Dorsolateral prefrontal cortex (tissue), 120 donors: ENCODE measurements at regions of chr14 and their contacts with region 1.

Region 1: DNA sequence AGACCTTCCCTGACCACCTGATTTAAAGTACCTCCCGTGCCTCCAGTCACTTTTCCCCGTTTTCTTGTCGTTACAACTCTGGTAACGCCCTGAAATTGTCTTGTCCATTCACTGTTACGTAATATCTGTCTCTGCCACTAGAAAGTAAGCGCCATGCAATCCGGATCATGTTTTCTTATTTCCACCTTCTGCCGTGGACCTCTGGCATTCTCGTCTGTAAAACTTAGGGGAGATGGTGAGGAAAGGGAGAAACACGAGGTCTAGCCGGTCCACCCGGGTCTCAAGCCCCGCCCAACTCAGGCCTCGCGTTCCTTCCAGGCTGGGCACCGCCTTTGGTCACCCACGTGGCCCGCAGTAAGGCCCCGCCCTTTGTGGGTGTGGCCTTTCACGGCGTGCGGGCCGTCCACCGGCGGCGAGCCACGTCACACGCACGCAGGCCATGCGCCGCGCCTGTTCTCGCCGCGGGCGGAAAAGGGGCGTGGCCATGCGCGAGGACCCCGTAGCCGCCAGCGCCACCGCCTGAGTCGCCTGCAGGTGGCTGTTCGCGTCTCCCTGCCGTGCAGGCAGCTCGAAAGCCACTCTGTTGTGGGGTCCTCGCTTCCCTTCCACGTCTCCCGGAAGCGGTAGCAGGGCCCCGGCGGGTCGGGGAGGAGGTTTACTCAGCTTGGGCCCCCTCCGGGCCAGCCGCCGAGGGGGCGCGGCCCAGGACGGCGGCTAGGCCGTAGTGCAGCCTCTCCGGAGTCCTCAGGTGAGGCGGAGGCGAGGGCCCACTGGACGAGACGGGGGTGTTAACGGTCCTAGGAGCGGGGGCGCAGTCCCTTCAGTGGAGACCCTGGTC is at the start of gene GOLGA5:
- DNase-seq: peak; percentile 97 to 100 (median 98)
- H3K4me3 ChIP-seq: peak within 1 kb of the TSS; percentile 77 to 100 (median 94)
- H3K27ac ChIP-seq: peak within 1 kb of the TSS; percentile 29 to 94 (median 83)
- H3K27me3 ChIP-seq: no peaks in the 10 kb centered on the region
- CTCF ChIP-seq: peak in 52 of 56 donors; percentile 15 to 77 (median 48)
- total RNA-seq, gene GOLGA5: 20.5 to 37.1 (median 26.5) TPM

Region 2: GRCh38 chr14:92106143-92106926 is 687.6 kb before region 1 on chr14 and contains the start of gene ATXN3:
- intact Hi-C with region 1: loop called in 1 of 2 experiments (anchors 10 kb)
- DNase-seq: peak; percentile 96 to 99 (median 98)
- H3K4me3 ChIP-seq: peak within 1 kb of the TSS; percentile 58 to 100 (median 93)
- H3K27ac ChIP-seq: peak within 1 kb of the TSS; percentile 75 to 99 (median 95)
- H3K27me3 ChIP-seq: no peaks in the 10 kb centered on the region
- CTCF ChIP-seq: peak; percentile 70 to 94 (median 85)
- total RNA-seq, gene ATXN3: 31.2 to 63.2 (median 46.6) TPM

Region 3: GRCh38 chr14:92121670-92122350 is 672.1 kb before region 1 on chr14 and contains the starts of genes CPSF2 and NDUFB1:
- intact Hi-C with region 1: loop called in 1 of 2 experiments (anchors 5 kb)
- DNase-seq: peak; percentile 72 to 91 (median 88)
- H3K4me3 ChIP-seq: peak within 1 kb of the TSS; percentile 72 to 99 (median 94)
- H3K27ac ChIP-seq: peak within 1 kb of the TSS; percentile 69 to 99 (median 96)
- H3K27me3 ChIP-seq: no peaks in the 10 kb centered on the region
- CTCF ChIP-seq: peak in 34 of 56 donors; percentile 2 to 52 (median 26)
- total RNA-seq, gene CPSF2: 26.8 to 56.4 (median 40.4) TPM
- total RNA-seq, gene NDUFB1: 64.8 to 207 (median 138) TPM

Region 4: GRCh38 chr14:92612988-92613658 is 180.8 kb before region 1 on chr14:
- intact Hi-C with region 1: no loop called
- DNase-seq: no peak
- H3K4me3 ChIP-seq: no peak overlapping the region
- H3K27ac ChIP-seq: no peak overlapping the region
- H3K27me3 ChIP-seq: no peaks in the 10 kb centered on the region
- CTCF ChIP-seq: peak in 52 of 56 donors; percentile 15 to 63 (median 46)

Region 5: DNA sequence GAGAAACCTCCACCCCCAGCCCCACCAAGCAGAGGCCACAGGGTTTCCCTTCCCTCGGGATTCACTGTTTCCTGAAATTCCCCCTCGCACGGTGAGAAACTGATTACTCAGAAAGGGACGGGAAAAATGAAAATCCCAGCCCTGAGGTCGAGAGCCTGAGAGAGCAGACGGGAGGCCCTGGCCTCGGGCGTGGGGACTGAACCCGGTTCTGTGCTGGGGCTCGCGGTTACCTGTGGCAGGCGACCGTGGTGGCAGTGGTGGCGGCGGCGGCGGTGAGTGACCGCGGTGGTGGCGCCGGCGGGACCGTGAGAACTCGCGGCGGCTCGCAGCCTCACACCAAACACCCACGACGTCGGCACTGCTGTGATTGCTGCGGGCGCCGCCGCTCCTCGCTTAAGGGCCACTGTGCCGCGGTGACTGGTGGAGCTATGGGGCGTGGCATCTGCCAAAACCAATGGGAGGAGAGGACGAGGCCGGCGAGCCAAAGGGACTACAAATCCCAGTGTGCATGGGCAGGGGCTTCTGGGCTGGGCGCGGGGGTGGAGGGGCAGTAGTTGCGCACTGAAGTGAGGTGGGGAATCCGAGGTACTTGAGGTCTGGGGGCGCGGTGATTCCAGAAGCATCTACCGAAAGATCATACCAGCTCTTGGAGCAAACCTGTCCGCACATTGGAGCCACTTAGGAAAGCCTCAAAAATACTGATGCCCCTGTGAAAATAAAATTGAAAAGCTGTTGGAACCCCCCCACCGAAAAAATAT is 45.5 kb before region 1 on chr14 and contains the start of gene LGMN:
- intact Hi-C with region 1: loop called in 1 of 2 experiments (anchors 1 kb)
- DNase-seq: peak; percentile 94 to 99 (median 99)
- H3K4me3 ChIP-seq: peak within 1 kb of the TSS; percentile 63 to 99 (median 88)
- H3K27ac ChIP-seq: peak within 1 kb of the TSS; percentile 14 to 94 (median 81)
- H3K27me3 ChIP-seq: no peaks in the 10 kb centered on the region
- CTCF ChIP-seq: peak in 34 of 56 donors; percentile 8 to 55 (median 32)
- total RNA-seq, gene LGMN: 34.8 to 93.8 (median 64.1) TPM

Region 6: DNA sequence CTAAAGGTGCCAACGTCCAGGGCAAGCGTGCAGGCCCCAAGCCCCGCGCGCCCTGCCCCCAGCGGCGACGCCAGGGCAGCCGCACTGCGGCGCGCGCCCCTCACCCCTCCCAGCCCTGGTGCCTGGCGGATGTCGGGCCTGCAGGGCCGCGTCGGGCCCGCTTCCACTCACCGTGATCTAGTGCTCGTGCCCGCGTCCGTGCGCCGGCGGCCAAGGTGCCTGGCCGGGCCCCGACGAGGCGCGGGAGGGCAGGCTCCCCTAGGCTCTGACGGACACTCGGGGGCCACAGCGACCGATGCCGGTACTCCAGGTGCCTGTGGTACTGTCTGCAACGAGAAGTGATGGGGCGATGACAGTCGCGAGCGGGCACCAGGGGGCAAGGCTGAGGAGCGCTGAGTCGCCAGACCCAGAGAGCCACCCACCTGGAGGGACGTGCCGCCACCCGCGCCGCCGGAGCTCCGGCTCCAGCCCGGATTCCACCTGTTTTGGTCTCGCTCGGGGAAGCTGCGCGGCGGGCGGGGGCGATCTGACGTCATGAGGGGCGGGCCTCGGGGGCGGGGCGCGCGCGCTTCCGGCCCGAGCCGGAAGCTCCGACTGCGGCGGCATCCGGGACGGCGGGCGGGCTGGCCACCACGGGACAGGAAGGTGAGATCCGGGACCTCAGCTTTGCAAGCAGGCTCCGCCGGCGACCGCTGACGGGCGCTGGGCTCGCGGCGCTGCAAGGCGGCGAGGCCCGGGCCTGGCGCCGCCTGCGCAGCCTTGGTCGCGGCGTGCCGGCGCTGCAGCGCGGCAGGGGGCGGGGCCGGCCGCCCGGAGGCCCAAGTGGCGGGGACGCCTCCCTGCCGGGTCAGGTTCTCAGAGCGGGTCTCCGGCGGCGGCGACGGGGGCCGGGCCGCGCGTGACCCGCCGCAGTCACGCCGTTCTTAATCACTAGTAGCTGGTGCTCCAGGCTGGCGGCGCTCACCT is 390.7 kb after region 1 on chr14 and contains the starts of genes LYSET and MOAP1:
- intact Hi-C with region 1: loop called in 1 of 2 experiments (anchors 10 kb)
- DNase-seq: peak; percentile 74 to 92 (median 86)
- H3K4me3 ChIP-seq: peak within 1 kb of the TSS; percentile 72 to 100 (median 96)
- H3K27ac ChIP-seq: peak within 1 kb of the TSS; percentile 64 to 99 (median 96)
- H3K27me3 ChIP-seq: no peaks in the 10 kb centered on the region
- CTCF ChIP-seq: peak in 28 of 56 donors; percentile 2 to 49 (median 26)
- total RNA-seq, gene LYSET: 7.5 to 23.0 (median 15.3) TPM
- total RNA-seq, gene MOAP1: 71.5 to 285 (median 191) TPM